ENCODE measurements at regions of chr17 and their contacts with region 1.

Region 1: DNA sequence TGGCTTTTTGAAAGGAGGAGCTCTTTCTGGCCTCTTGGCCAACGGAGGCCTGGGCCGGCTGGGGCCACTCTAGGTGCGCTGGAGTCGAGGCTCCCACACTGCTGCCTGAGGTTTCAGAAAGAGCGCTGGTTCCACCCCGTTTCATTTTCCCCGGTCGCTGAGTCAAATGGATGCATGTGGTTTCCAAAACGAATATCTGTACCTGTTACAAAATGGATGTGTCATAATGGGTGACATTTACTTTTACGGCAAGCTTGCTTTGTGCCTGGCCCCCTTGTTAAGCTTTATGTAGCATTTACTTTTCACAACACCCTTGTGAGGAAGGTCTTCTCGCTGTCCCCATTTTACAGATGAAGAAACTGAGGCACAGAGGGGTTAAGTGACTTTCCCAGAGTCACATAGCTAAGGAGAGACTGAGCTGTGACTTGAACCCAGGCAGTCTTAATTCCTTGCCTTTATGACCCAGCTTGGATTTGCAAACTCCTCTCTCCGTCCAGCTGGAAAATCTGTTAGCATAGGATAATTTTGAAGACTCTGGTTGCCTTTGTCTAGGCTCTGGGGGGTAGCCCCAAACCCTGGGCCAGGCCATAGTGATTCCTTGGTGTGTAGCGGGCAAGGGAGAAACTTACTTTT is 10.6 kb downstream of the KSR1 start:
- DNase-seq: peak; percentile 92
- ATAC-seq: peak; percentile 84
- H3K4me3 Mint-ChIP-seq: peak overlapping the region; percentile 67
- H3K27ac Mint-ChIP-seq: peak overlapping the region; percentile 96
- H3K4me1 Mint-ChIP-seq: peaks cover 85% of the 10 kb centered on the region
- H3K27me3 Mint-ChIP-seq: no peaks in the 10 kb centered on the region
- CTCF ChIP-seq: no peak

Region 2: DNA sequence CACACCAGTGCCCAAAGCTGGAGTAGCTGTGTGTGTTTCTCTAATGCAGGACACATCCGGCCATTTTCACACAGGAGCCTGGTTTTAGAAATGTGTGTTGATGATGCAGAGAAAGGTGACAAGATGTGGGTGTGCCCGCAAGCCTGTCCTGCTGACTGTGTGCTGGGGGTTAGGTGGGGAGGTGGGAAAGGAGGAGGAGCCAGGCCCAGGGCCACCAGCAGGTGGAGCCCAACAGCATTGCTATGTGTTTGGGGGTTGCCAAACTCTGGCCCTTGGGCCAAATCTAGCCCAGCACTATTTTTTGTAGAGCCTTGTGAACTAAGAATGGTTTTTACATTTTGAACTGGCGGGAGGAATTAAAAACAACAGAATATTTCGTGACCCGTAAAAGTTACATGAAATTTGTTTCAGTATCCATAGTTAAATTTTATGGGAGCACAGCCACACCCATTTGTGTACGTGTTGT is 102.4 kb after region 1 on chr17:
- CTCF ChIA-PET with region 1: interaction called, 12 read pairs
- POLR2A ChIA-PET with region 1: interaction called, 6 read pairs
- intact Hi-C with region 1: loop called (anchors 5 kb)
- DNase-seq: peak; percentile 87
- ATAC-seq: peak; percentile 72
- H3K4me3 Mint-ChIP-seq: no peak overlapping the region
- H3K27ac Mint-ChIP-seq: peak overlapping the region; percentile 69
- H3K4me1 Mint-ChIP-seq: peaks cover 76% of the 10 kb centered on the region
- H3K27me3 Mint-ChIP-seq: no peaks in the 10 kb centered on the region
- CTCF ChIP-seq: peak; percentile 75

Measured in activated CD8-positive, alpha-beta T cell treated with anti-CD3 and anti-CD28 coated beads for 36 hours (primary cell).